ENCODE measurements at regions of chr14 and their contacts with region 1.

Region 1: GRCh38 chr14:81625343-81625742 is 91.7 kb upstream of the SEL1L start:
- DNase-seq: peak; percentile 15
- ATAC-seq: 0 out of 2 replicates have a peak, but pooled peaks have one; percentile 52
- H3K4me3 ChIP-seq: no peak overlapping the region
- H3K27ac ChIP-seq: no peak overlapping the region
- H3K4me1 ChIP-seq: no peaks in the 10 kb centered on the region
- H3K27me3 ChIP-seq: no peaks in the 10 kb centered on the region
- CTCF ChIP-seq: peak; percentile 6 to 56 (median 19); a peak in 3 of 6 replicates
- POLR2A ChIP-seq: no peak
- RAD21 ChIP-seq: peak; percentile 46

Region 2: DNA sequence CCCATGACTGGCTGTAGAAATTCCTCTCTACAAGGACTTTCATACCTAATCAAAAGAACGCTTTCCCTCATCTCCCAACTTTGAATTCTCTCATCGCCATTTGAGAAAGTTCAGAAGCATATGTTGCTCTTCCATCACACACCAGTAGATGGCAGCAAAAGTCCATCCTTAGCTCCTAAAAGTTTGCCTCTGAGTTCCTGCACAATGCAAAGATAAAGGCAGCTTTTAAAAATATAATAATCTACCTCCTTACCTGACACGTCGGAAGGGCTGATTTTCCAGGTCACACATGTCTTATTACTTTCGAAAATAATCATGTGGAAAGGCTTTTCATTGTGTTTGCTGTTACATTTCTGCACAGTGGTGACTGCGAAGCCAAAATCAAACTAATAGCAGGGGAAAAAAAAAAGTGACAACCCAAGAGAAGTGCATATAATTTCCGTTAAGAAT is 365.0 kb after region 1 on chr14:
- CTCF ChIA-PET with region 1: no interaction called
- POLR2A ChIA-PET with region 1: no interaction called
- RAD21 ChIA-PET with region 1: no interaction called
- intact Hi-C with region 1: loop called (anchors 5 kb)
- DNase-seq: peak; percentile 18
- ATAC-seq: no peak
- H3K4me3 ChIP-seq: no peak overlapping the region
- H3K27ac ChIP-seq: no peak overlapping the region
- H3K4me1 ChIP-seq: no peaks in the 10 kb centered on the region
- H3K27me3 ChIP-seq: no peaks in the 10 kb centered on the region
- CTCF ChIP-seq: peak; percentile 13 to 73 (median 67); a peak in 4 of 6 replicates
- POLR2A ChIP-seq: no peak
- RAD21 ChIP-seq: peak; percentile 56

Measured in HCT116 (cell line).